ENCODE measurements at regions of chr17 and their contacts with region 1.

Region 1: DNA sequence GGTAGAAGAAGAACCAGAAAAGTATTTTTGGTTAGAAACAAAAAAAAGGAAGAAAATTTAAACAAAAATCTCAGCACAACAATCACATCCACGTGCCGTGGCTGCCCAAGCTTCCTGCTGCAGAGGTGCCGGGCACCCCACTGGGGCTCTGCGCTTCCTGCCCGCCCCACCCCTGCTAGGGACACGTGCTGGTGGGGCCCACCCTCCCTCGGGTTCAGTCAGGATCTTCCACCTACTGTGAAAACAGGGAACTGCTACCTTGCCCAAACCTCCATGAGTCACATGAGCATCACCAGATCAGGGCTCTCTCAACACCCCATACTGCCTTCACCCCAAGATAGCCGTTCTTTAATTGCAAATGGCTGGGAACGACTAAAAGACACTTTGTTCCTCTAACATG is 24.4 kb upstream of the CYTH1 start:
- DNase-seq: peak; percentile 60
- H3K4me3 Mint-ChIP-seq: no peak overlapping the region
- H3K27ac Mint-ChIP-seq: peak overlapping the region; percentile 95
- H3K4me1 Mint-ChIP-seq: peaks cover 51% of the 10 kb centered on the region
- H3K27me3 Mint-ChIP-seq: no peaks in the 10 kb centered on the region

Region 2: DNA sequence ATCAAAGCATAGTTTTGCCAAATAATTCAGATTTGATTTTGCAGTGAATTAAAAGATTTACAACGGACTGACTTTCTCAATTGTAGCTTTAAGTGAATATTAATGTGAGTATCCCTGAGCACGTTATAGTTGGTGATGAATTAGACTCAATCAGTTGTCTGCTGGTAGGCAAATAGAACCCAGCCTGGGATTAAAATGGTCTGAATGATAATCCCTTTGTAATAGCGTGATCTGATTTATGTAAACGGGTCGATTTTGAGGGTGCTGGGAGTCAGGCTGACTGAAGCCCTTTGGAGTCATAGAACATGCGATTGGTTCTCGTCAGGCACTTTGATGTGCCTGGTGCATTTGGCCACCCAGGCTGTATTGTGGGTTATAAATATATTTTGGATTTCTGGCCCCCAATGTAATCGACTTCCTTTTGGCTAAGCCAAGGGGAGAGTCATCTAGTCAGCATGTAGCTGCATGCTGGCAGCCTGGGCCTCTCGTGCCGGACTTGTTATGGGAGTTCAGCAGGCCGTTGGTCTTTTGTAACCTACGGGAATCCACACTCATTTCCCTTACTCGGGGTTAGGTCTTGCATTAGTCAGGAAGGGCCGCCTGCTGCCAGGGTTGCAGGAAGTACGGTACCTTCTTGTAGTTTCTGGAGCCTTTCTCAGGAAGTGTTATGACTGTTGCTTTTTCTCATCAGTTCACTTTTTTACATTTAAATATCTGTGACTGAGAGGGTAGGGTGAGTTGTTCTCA is 422.6 kb before region 1 on chr17:
- CTCF ChIA-PET with region 1: no interaction called
- POLR2A ChIA-PET with region 1: no interaction called
- intact Hi-C with region 1: loop called (anchors 5 kb)
- DNase-seq: peak; percentile 88
- H3K4me3 Mint-ChIP-seq: peak overlapping the region; percentile 75
- H3K27ac Mint-ChIP-seq: peak overlapping the region; percentile 99
- H3K4me1 Mint-ChIP-seq: peaks cover 87% of the 10 kb centered on the region
- H3K27me3 Mint-ChIP-seq: peaks cover 1% of the 10 kb centered on the region

Region 3: GRCh38 chr17:78774956-78775571 is 31.4 kb before region 1 on chr17:
- CTCF ChIA-PET with region 1: interaction called, 4 read pairs
- POLR2A ChIA-PET with region 1: interaction called, 7 read pairs
- intact Hi-C with region 1: loop called (anchors 1 kb)
- DNase-seq: peak; percentile 89
- H3K4me3 Mint-ChIP-seq: peak overlapping the region; percentile 82
- H3K27ac Mint-ChIP-seq: peak overlapping the region; percentile 99
- H3K4me1 Mint-ChIP-seq: peaks cover 59% of the 10 kb centered on the region
- H3K27me3 Mint-ChIP-seq: no peaks in the 10 kb centered on the region

Region 4: GRCh38 chr17:78781948-78782916 is 24.2 kb before region 1 on chr17 and contains the start of gene CYTH1:
- CTCF ChIA-PET with region 1: interaction called, 4 read pairs
- POLR2A ChIA-PET with region 1: interaction called, 14 read pairs
- intact Hi-C with region 1: loop called (anchors 1 kb)
- DNase-seq: peak; percentile 98
- H3K4me3 Mint-ChIP-seq: peak within 1 kb of the TSS; percentile 90
- H3K27ac Mint-ChIP-seq: peak within 1 kb of the TSS; percentile 98
- H3K4me1 Mint-ChIP-seq: peaks cover 48% of the 10 kb centered on the region
- H3K27me3 Mint-ChIP-seq: no peaks in the 10 kb centered on the region
- total RNA-seq, gene CYTH1: 184 to 204 TPM

Region 5: GRCh38 chr17:78817123-78817522 is 10.7 kb after region 1 on chr17:
- CTCF ChIA-PET with region 1: interaction called, 3 read pairs
- POLR2A ChIA-PET with region 1: interaction called, 7 read pairs
- intact Hi-C with region 1: loop called (anchors 1 kb)
- DNase-seq: peak; percentile 89
- H3K4me3 Mint-ChIP-seq: peak overlapping the region; percentile 2
- H3K27ac Mint-ChIP-seq: peak overlapping the region; percentile 92
- H3K4me1 Mint-ChIP-seq: peaks cover 61% of the 10 kb centered on the region
- H3K27me3 Mint-ChIP-seq: no peaks in the 10 kb centered on the region

Region 6: GRCh38 chr17:78840725-78841611 is 34.5 kb after region 1 on chr17 and contains the start of gene USP36:
- CTCF ChIA-PET with region 1: interaction called, 3 read pairs
- POLR2A ChIA-PET with region 1: no interaction called
- intact Hi-C with region 1: loop called (anchors 5 kb)
- DNase-seq: peak; percentile 100
- H3K4me3 Mint-ChIP-seq: peak within 1 kb of the TSS; percentile 84
- H3K27ac Mint-ChIP-seq: peak within 1 kb of the TSS; percentile 89
- H3K4me1 Mint-ChIP-seq: peaks cover 46% of the 10 kb centered on the region
- H3K27me3 Mint-ChIP-seq: no peaks in the 10 kb centered on the region
- total RNA-seq, gene USP36: 71.2 to 74.3 TPM